ENCODE measurements at regions of chr6 and their contacts with region 1.

Region 1: GRCh38 chr6:41367700-41368099 is 32.3 kb downstream of the NCR2 start:
- DNase-seq: no peak
- H3K4me3 ChIP-seq: no peak overlapping the region
- CTCF ChIP-seq: peak; percentile 87

Region 2: GRCh38 chr6:41318654-41319565 is 48.8 kb before region 1 on chr6:
- CTCF ChIA-PET with region 1: interaction called, 11 read pairs
- POLR2A ChIA-PET with region 1: no interaction called
- DNase-seq: peak; percentile 17
- H3K4me3 ChIP-seq: peak overlapping the region; percentile 51
- CTCF ChIP-seq: peak; percentile 99

Region 3: GRCh38 chr6:41424370-41425058 is 56.8 kb after region 1 on chr6:
- CTCF ChIA-PET with region 1: interaction called, 25 read pairs
- POLR2A ChIA-PET with region 1: no interaction called
- DNase-seq: peak; percentile 19
- H3K4me3 ChIP-seq: no peak overlapping the region
- CTCF ChIP-seq: peak; percentile 85

Region 4: DNA sequence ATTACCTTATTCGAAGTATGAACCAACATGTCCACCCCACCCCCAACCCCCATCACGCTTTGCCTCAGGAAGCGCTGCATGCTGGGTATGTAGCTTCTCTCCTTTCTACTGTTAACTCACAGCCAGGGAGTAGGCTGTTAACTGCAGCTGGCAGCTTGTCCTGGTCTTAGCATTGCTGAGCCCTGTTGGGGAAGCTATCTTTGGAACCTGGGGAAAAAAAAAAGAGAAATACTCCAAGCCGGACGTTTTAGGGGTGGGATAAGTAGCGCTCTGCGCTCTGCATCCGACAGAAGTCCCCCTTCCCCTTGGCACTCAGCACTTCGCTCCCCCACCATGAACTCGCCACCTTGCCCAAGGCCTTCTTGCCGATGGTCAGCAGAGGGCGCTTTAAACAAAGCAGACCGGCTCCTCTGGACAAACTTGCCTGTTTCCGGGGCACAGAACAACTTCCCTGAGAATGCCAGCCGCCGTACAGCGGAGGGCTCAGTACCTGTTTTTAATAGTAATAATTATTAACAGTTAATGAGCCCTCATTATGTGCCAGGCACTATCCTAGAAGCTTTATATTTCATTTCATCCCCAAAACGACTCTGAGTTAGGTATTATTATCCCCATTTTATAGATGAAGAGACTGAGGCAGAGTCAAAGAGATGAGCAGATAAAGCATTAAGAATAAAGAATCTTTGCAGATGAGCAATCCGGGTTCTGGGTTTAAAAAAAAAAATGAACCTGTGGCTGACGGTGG is 235.3 kb after region 1 on chr6:
- CTCF ChIA-PET with region 1: interaction called, 481 read pairs
- POLR2A ChIA-PET with region 1: no interaction called
- DNase-seq: no peak
- H3K4me3 ChIP-seq: no peak overlapping the region; the same call in 1 of the 2 replicates
- CTCF ChIP-seq: peak; percentile 95

Region 5: GRCh38 chr6:41663563-41663962 is 295.9 kb after region 1 on chr6:
- CTCF ChIA-PET with region 1: interaction called, 16 read pairs
- POLR2A ChIA-PET with region 1: no interaction called
- DNase-seq: no peak
- H3K4me3 ChIP-seq: no peak overlapping the region
- CTCF ChIP-seq: no peak

Region 6: GRCh38 chr6:41705996-41706835 is 338.5 kb after region 1 on chr6:
- CTCF ChIA-PET with region 1: interaction called, 14 read pairs
- POLR2A ChIA-PET with region 1: no interaction called
- DNase-seq: no peak
- H3K4me3 ChIP-seq: no peak overlapping the region
- CTCF ChIP-seq: peak; percentile 76

Region 7: GRCh38 chr6:41780546-41781427 is 413.1 kb after region 1 on chr6 and contains the start of gene PRICKLE4:
- CTCF ChIA-PET with region 1: interaction called, 104 read pairs
- POLR2A ChIA-PET with region 1: no interaction called
- DNase-seq: no peak
- H3K4me3 ChIP-seq: peak within 1 kb of the TSS; percentile 73
- CTCF ChIP-seq: no peak

Measured in AG04449 (cell line).